Breast epithelium (tissue), 4 donors: ENCODE measurements at regions of chr11 and their contacts with region 1.

Region 1: GRCh38 chr11:57512646-57513451 is 2.7 kb downstream of the SLC43A1 start:
- DNase-seq: no peak
- H3K4me3 ChIP-seq: no peak overlapping the region
- H3K27ac ChIP-seq: no peak overlapping the region
- H3K4me1 ChIP-seq: peaks cover 3 to 8% of the 10 kb centered on the region in 2 donors
- H3K27me3 ChIP-seq: no peaks in the 10 kb centered on the region
- CTCF ChIP-seq: no peak
- POLR2A ChIP-seq: no peak

Region 2: DNA sequence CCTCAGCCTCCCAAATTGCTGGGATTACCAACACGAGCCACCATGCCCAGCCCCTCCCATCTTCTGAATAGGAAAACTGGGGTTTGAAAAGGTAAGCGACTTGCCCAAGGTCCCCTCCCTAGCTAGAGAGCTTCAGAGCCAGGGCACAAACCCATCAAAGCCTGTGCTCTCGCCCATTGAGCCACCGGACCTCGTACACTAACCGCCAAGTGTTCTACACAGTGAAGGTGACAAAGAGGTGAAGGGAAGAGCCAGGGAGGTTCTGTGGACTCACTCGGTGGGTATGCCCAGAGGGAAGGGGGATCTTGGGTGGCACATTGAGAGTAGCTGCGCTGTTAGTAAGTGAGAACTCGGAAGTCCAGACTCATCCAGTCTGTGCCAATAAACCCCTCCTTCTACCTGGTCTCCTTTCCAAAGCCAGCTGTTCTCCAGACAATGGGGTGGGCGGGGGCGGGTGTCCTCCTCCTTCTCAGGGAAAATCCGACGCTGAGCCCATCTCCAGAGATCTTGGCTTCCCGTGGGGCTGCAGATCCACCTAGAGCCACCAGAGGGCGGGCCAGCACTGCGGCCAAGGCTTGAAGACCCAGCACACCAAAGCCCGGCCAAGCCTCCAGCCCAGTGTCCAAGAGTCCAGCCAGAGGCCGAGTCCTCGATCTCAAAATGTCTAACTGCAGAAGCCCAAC is 55.7 kb before region 1 on chr11:
- intact Hi-C with region 1: no loop called
- DNase-seq: peak; percentile 77 to 89
- H3K4me3 ChIP-seq: peak overlapping the region in 1 of 3 donors; percentile 72
- H3K27ac ChIP-seq: no peak overlapping the region
- H3K4me1 ChIP-seq: peaks cover 6 to 26% of the 10 kb centered on the region in 2 donors
- H3K27me3 ChIP-seq: peaks cover 0 to 19% of the 10 kb centered on the region in 2 donors
- CTCF ChIP-seq: peak; percentile 63 to 96 (median 92)
- POLR2A ChIP-seq: no peak

Region 3: DNA sequence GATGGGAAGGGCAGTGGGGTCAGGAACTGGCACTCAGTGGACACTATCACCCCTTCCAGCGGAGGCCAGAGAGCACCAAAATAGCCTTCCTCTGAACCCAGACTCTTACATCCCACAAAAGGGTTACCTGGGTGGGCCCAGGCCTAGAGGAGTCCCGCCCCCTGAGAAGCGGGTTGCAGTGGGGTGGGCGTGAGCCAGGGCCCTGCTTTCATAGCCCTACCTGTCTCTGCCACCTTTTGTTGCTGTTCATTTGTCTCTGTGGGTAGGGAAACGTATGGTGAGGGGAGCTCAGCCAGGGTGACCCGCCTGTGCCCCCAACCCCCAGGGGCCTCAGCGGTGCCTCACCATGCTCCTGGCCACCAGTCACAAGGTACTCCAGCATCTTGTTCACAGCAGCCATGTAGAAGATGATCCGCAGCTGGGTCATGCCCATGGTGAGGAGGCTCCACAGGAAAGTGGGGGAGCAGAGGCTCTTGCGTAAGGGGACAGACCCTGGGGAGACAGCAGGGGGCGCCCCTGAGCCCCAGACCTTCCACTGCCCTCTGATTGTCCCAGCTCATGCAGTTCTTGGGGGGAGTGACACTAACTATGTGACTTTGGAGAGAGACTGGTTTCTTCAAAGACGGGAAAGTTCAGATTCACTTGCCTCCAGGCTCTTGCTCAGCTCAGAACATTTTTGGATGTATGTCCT is 21.3 kb before region 1 on chr11:
- intact Hi-C with region 1: loop called (anchors 1 kb)
- DNase-seq: no peak
- H3K4me3 ChIP-seq: no peak overlapping the region
- H3K27ac ChIP-seq: no peak overlapping the region
- H3K4me1 ChIP-seq: no peaks in the 10 kb centered on the region
- H3K27me3 ChIP-seq: no peaks in the 10 kb centered on the region
- CTCF ChIP-seq: peak in 1 of 3 donors; percentile 17
- POLR2A ChIP-seq: no peak

Region 4: GRCh38 chr11:58391879-58392278 is 879.0 kb after region 1 on chr11:
- intact Hi-C with region 1: no loop called
- DNase-seq: no peak
- H3K4me3 ChIP-seq: no peak overlapping the region
- H3K27ac ChIP-seq: no peak overlapping the region
- H3K4me1 ChIP-seq: no peaks in the 10 kb centered on the region
- H3K27me3 ChIP-seq: no peaks in the 10 kb centered on the region
- CTCF ChIP-seq: no peak
- POLR2A ChIP-seq: no peak